Right lobe of liver (tissue), 6 donors: ENCODE measurements at regions of chr1 and their contacts with region 1.

Region 1: DNA sequence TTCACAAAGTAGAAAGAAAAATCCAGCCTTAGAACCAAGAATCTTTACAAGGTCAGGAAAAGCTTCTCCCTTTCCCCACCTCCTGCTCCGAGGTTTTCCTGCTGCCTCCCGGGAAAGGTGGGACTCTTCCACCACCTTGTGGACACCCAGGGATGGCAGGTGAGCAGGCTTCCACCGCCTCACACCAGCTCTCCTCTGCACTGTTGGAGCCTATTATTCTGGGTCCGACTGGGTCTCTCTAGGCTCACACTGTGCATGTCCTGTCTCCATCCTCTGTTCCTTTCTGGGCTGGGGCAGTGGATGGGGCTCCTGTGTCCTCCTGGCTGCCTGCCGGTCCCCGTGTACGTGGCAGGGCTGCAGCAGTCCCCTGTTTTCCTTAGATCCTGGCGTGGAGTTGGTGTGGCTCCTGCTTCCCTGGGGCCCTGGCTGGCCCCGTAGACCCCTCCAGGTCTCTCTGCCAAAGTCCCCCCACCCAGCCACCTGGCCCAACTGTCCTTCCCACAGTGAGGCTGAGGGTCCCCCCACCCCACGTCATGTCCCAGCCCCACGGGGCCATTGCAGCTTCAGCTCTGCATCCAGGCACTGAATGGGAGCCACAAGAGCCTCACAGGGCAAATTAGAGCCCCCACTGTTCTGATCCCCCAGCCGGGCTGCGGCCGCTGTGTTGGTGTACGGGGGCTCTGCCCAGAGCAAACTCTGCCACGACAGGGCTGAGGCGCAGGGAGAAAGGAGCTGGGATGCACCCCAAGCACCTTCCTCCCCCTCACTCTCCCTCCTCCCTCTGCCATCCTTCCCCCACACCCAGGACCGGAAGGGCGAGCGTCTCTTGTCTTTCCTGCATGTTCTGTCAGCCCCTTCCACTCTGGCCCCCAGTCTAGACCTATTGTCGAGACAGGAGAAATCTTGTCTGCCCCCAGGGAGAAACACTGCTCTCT is 3.3 kb upstream of the SLC45A1 start:
- DNase-seq: peak; percentile 78 to 86 (median 79)
- ATAC-seq: peak; percentile 68 to 80 (median 74)
- H3K4me3 ChIP-seq: no peak overlapping the region
- H3K27ac ChIP-seq: peak overlapping the region in 2 of 3 donors; percentile 60 to 83
- H3K4me1 ChIP-seq: peaks cover 0 to 28% (median 13%) of the 10 kb centered on the region in 4 donors
- H3K27me3 ChIP-seq: no peaks in the 10 kb centered on the region
- CTCF ChIP-seq: peak; percentile 91 to 96 (median 94)
- POLR2A ChIP-seq: no peak

Region 2: GRCh38 chr1:7975212-7975865 is 339.3 kb before region 1 on chr1:
- intact Hi-C with region 1: loop called in 1 of 2 experiments (anchors 5 kb)
- DNase-seq: peak; percentile 68 to 80 (median 76)
- ATAC-seq: peak; percentile 99 to 100 (median 100)
- H3K4me3 ChIP-seq: no peak overlapping the region
- H3K27ac ChIP-seq: no peak overlapping the region
- H3K4me1 ChIP-seq: peaks cover 0 to 14% (median 1%) of the 10 kb centered on the region in 4 donors
- H3K27me3 ChIP-seq: no peaks in the 10 kb centered on the region
- CTCF ChIP-seq: peak; percentile 87 to 93 (median 90)
- POLR2A ChIP-seq: no peak

Region 3: GRCh38 chr1:7989762-7990428 is 324.7 kb before region 1 on chr1:
- intact Hi-C with region 1: loop called in 1 of 2 experiments (anchors 5 kb)
- DNase-seq: no peak
- ATAC-seq: peak in 2 of 4 donors; percentile 14 to 54
- H3K4me3 ChIP-seq: no peak overlapping the region
- H3K27ac ChIP-seq: no peak overlapping the region
- H3K4me1 ChIP-seq: no peaks in the 10 kb centered on the region
- H3K27me3 ChIP-seq: no peaks in the 10 kb centered on the region
- CTCF ChIP-seq: no peak
- POLR2A ChIP-seq: no peak

Region 4: DNA sequence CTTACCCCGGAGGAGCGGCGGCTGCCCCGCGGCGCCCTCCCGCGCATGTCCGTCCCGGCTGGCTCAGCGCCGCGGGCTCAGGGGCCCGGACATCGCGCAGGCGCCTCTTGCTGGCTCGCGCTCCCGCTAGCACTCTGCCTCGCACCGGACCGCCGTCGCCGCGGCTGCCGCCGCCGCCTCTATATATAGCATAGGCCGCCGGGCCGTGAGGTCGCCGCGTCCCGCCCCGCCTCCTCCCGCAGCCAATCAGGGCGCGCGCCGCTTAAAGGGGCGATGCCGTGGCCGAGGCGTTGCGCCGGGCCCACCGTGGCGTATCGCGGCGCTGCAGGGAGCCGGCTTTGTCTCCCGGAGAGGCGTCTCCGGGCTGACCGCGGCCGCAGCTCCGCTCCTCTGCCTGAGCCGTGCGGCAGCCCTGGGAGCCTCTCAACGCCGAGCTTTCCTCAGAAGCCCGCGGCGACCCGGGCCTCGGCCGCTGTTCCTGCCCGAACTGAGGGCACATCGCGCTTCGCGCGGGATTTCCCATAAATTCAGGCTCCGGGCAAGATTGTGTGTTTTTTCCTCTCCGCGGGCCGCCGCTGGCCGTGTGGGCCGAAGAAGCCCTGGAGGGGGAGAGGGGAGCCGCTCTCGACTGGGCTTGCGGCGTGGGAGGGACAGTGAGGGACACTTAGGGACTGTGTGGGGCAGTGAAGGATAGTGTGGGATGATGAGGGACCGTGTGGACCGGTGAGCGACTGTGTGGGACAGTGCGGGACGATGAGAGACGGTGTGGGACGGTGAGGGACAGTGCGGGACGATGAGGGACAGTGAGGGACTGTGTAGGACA is 288.2 kb before region 1 on chr1 and contains the start of gene ERRFI1:
- intact Hi-C with region 1: loop called in 1 of 2 experiments (anchors 5 kb)
- DNase-seq: peak; percentile 95 to 97 (median 96)
- ATAC-seq: peak; percentile 69 to 81 (median 77)
- H3K4me3 ChIP-seq: peak within 1 kb of the TSS; percentile 70 to 78 (median 76)
- H3K27ac ChIP-seq: peak within 1 kb of the TSS; percentile 97 to 100 (median 100)
- H3K4me1 ChIP-seq: peaks cover 0 to 39% (median 7%) of the 10 kb centered on the region in 4 donors
- H3K27me3 ChIP-seq: no peaks in the 10 kb centered on the region
- CTCF ChIP-seq: no peak
- POLR2A ChIP-seq: peak; percentile 100
- total RNA-seq, gene ERRFI1: 109 to 539 (median 214) TPM

Region 5: GRCh38 chr1:8259498-8260290 is 54.9 kb before region 1 on chr1:
- intact Hi-C with region 1: loop called (anchors 5 to 10 kb)
- DNase-seq: peak; percentile 73 to 93 (median 82)
- ATAC-seq: peak; percentile 41 to 61 (median 46)
- H3K4me3 ChIP-seq: peak overlapping the region in 2 of 3 donors; percentile 12 to 32
- H3K27ac ChIP-seq: peak overlapping the region; percentile 65 to 97 (median 94)
- H3K4me1 ChIP-seq: peaks cover 0 to 60% (median 26%) of the 10 kb centered on the region in 4 donors
- H3K27me3 ChIP-seq: no peaks in the 10 kb centered on the region
- CTCF ChIP-seq: no peak
- POLR2A ChIP-seq: peak; percentile 22